Lower lobe of right lung (tissue), 2 donors: ENCODE measurements at regions of chr2 and their contacts with region 1.

Region 1: GRCh38 chr2:176126929-176127773 is 2.4 kb upstream of the HOXD8 start:
- DNase-seq: no peak
- ATAC-seq: no peak
- H3K4me3 ChIP-seq: no peak overlapping the region
- H3K27ac ChIP-seq: no peak overlapping the region
- H3K4me1 ChIP-seq: peaks cover 29% of the 10 kb centered on the region
- H3K27me3 ChIP-seq: peaks cover 96% of the 10 kb centered on the region
- CTCF ChIP-seq: peak; percentile 91

Region 2: DNA sequence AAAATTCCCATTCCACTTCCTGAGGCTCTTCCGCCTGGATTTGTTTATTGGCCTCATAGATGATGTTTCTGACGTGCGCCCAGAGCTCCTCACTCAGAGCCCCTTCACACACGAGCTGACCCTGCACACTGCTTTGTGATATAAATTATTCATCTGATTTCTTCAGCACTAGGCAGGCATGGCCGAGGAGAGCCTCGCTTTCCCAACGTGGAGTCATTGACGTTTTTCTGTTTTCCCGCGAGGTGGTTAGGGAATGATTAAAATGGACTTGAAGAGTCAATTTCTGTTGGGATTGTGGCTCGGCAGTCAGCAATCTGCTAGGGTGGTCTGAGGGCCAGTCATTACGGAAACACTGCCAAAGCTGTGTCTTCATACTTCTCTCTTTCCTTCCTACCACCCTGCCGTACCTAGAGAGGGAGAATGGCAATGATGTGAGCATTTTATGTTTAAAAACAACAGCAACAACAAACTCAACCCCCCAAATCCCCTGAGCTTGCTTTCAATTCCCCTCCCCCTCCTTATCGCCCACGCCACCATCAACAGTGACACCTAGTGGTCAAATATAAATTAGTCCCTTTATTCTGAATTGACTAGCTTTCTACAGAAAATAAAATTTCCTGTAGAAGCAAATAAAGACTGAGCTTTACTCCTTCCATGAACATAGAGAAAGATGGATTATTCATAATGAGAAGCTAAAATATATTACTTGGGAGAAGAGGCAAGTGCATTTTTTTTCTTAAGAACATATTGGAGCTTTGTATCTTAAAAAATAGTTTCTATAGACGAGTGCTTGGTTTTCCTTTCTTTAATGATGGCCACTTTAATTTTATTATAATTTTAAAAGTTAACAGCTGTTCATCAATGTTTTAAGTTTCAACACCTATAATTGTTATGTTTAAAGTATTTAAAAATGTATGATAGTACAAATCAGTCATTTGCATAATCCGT is 427.2 kb after region 1 on chr2:
- intact Hi-C with region 1: loop called (anchors 10 kb)
- DNase-seq: no peak
- ATAC-seq: peak; percentile 76 to 84
- H3K4me3 ChIP-seq: peak overlapping the region; percentile 59
- H3K27ac ChIP-seq: peak overlapping the region; percentile 59
- H3K4me1 ChIP-seq: peaks cover 17% of the 10 kb centered on the region
- H3K27me3 ChIP-seq: peaks cover 24% of the 10 kb centered on the region
- CTCF ChIP-seq: peak; percentile 70

Region 3: GRCh38 chr2:176638167-176639015 is 511.2 kb after region 1 on chr2:
- intact Hi-C with region 1: loop called (anchors 5 kb)
- DNase-seq: peak; percentile 67
- ATAC-seq: peak; percentile 88 to 95
- H3K4me3 ChIP-seq: peak overlapping the region; percentile 67
- H3K27ac ChIP-seq: no peak overlapping the region
- H3K4me1 ChIP-seq: peaks cover 11% of the 10 kb centered on the region
- H3K27me3 ChIP-seq: peaks cover 90% of the 10 kb centered on the region
- CTCF ChIP-seq: peak; percentile 72

Region 4: GRCh38 chr2:176653479-176654443 is 526.6 kb after region 1 on chr2:
- intact Hi-C with region 1: loop called (anchors 5 kb)
- DNase-seq: no peak
- ATAC-seq: peak; percentile 73 to 75
- H3K4me3 ChIP-seq: no peak overlapping the region
- H3K27ac ChIP-seq: no peak overlapping the region
- H3K4me1 ChIP-seq: no peaks in the 10 kb centered on the region
- H3K27me3 ChIP-seq: no peaks in the 10 kb centered on the region
- CTCF ChIP-seq: peak; percentile 53